BJ (cell line): ENCODE measurements at regions of chr2 and their contacts with region 1.

Region 1: GRCh38 chr2:150485114-150485870 is 2.2 kb downstream of the RND3 start:
- DNase-seq: no peak
- H3K4me3 ChIP-seq: peak overlapping the region; percentile 98
- H3K27me3 ChIP-seq: no peaks in the 10 kb centered on the region
- CTCF ChIP-seq: no peak

Region 2: DNA sequence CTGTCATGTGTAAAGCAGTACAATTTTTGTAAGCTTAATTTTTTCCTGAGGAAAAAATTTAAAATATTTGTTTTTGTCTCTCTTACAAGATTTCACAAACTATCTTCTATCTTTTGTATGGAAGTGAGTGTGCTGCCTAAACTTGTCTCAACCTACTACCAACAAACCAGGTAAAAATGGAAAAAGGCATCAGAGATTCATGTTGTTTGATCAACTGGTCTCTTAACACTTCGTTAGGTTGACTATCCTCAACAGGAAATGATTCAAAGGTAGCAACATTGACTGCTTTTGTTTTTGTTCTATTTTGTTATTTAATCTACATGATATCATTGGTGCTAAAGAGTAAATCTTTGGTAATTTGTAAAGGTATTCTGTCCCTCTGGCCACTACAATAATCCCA is 49.9 kb after region 1 on chr2:
- CTCF ChIA-PET with region 1: no interaction called
- POLR2A ChIA-PET with region 1: no interaction called
- DNase-seq: no peak
- H3K4me3 ChIP-seq: no peak overlapping the region
- H3K27me3 ChIP-seq: no peaks in the 10 kb centered on the region
- CTCF ChIP-seq: no peak

Region 3: GRCh38 chr2:150570712-150571111 is 85.4 kb after region 1 on chr2:
- CTCF ChIA-PET with region 1: no interaction called
- POLR2A ChIA-PET with region 1: no interaction called
- DNase-seq: peak; percentile 88
- H3K4me3 ChIP-seq: no peak overlapping the region
- H3K27me3 ChIP-seq: no peaks in the 10 kb centered on the region
- CTCF ChIP-seq: no peak

Region 4: GRCh38 chr2:150587547-150588514 is 102.5 kb after region 1 on chr2:
- CTCF ChIA-PET with region 1: no interaction called
- POLR2A ChIA-PET with region 1: interaction called, 11 read pairs
- DNase-seq: peak; percentile 76
- H3K4me3 ChIP-seq: no peak overlapping the region
- H3K27me3 ChIP-seq: no peaks in the 10 kb centered on the region
- CTCF ChIP-seq: no peak

Region 5: GRCh38 chr2:150601280-150602038 is 116.2 kb after region 1 on chr2:
- CTCF ChIA-PET with region 1: no interaction called
- POLR2A ChIA-PET with region 1: interaction called, 12 read pairs
- DNase-seq: peak; percentile 66
- H3K4me3 ChIP-seq: no peak overlapping the region
- H3K27me3 ChIP-seq: no peaks in the 10 kb centered on the region
- CTCF ChIP-seq: no peak